K562 (cell line): ENCODE measurements at regions of chr6 and their contacts with region 1.

Region 1: DNA sequence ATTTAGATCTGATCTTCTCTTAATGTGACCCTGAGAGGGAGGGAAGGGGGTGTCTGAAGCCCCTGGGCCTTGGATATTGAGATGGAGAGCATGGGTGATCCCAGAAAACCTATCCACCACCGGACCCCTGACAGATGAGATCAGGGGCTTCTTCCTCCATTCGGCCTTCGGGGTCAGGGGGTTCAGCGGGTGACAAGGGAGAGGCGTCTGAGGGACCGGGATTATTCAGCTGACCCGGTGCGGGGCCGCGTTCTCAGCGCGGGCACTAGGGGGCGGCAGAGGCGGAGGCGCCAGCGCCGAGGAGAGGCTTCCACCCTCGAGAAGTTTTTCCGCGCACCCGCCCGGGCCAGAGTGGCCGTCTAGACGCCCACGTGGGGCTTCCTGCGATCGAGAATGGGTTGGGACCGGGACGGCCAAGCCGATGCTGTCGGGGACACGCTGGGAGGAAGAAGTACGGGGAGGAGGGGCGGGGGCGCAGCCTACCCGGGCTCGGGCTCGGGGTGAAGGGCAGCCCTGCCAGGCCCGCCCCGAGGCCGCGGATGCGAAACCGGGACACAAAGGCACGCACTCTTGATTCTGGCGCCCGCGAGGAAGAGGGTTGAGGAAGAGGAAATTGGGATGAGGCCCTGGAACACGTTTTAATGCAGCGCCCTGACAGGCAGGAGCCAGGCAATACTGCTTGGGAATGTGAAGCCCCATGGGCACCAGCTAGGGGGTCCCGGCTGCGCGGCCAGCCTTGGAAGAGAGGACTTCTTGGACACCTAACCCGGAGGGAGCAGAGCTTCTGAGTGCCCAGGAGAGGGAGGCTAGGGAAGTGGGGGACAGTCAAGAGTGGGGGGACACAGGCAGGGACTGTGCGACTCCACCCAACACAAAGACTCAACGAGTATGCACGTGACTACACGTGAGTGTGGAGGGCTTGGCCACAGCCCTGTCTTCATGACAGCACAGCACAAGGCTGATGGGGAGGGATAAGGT is 30.6 kb downstream of the COL11A2 start:
- DNase-seq: peak; percentile 83 to 95 (median 93)
- ATAC-seq: peak; percentile 97
- H3K4me3 ChIP-seq: peak overlapping the region; percentile 30
- H3K27ac ChIP-seq: no peak overlapping the region
- H3K4me1 ChIP-seq: peaks cover 7 to 26% of the 10 kb centered on the region in 2 experiments; a peak in 3 of 5 replicates
- H3K27me3 ChIP-seq: peaks cover 5 to 39% of the 10 kb centered on the region in 2 experiments; a peak in 3 of 5 replicates
- CTCF ChIP-seq: peak; percentile 93 to 96 (median 94)
- EP300 ChIP-seq: no peak
- POLR2A ChIP-seq: 0 out of 2 replicates have a peak, but pooled peaks have one; percentile 32
- RAD21 ChIP-seq: peak; percentile 66 to 83

Region 2: GRCh38 chr6:32140420-32141046 is 1021.1 kb before region 1 on chr6:
- CTCF ChIA-PET with region 1: no interaction called
- POLR2A ChIA-PET with region 1: no interaction called
- in situ Hi-C with region 1: loop called (anchors 5 kb)
- intact Hi-C with region 1: no loop called
- DNase-seq: peak in 1 of 4 experiments; percentile 51
- ATAC-seq: no peak; the same call in 2 of the 3 replicates
- H3K4me3 ChIP-seq: no peak overlapping the region
- H3K27ac ChIP-seq: no peak overlapping the region; the same call in 2 of the 3 replicates
- H3K4me1 ChIP-seq: peaks cover 9 to 13% of the 10 kb centered on the region in 2 experiments; a peak in 4 of 5 replicates
- H3K27me3 ChIP-seq: no peaks in the 10 kb centered on the region
- CTCF ChIP-seq: no peak
- EP300 ChIP-seq: no peak; the same call in 1 of the 2 replicates
- POLR2A ChIP-seq: no peak
- RAD21 ChIP-seq: no peak

Region 3: GRCh38 chr6:32984605-32985389 is 176.8 kb before region 1 on chr6:
- CTCF ChIA-PET with region 1: no interaction called
- POLR2A ChIA-PET with region 1: no interaction called
- in situ Hi-C with region 1: no loop called
- intact Hi-C with region 1: no loop called
- DNase-seq: peak; percentile 80 to 93 (median 80)
- ATAC-seq: peak; percentile 75
- H3K4me3 ChIP-seq: no peak overlapping the region
- H3K27ac ChIP-seq: no peak overlapping the region
- H3K4me1 ChIP-seq: peaks cover 0 to 6% of the 10 kb centered on the region in 2 experiments; a peak in 2 of 5 replicates
- H3K27me3 ChIP-seq: peaks cover 8 to 15% of the 10 kb centered on the region in 2 experiments; a peak in 3 of 5 replicates
- CTCF ChIP-seq: peak; percentile 95 to 99 (median 97)
- EP300 ChIP-seq: no peak
- POLR2A ChIP-seq: no peak
- RAD21 ChIP-seq: peak; percentile 97 to 99